ENCODE measurements at regions of chr11 and their contacts with region 1.

Region 1: GRCh38 chr11:47004595-47005033 is 68.1 kb downstream of the CSTPP1 start:
- DNase-seq: peak; percentile 83
- ATAC-seq: peak; percentile 98 to 99

Region 2: GRCh38 chr11:46832511-46833214 is 172.0 kb before region 1 on chr11:
- intact Hi-C with region 1: no loop called
- DNase-seq: no peak
- ATAC-seq: no peak

Region 3: GRCh38 chr11:46916286-46917108 is 88.1 kb before region 1 on chr11:
- intact Hi-C with region 1: loop called in 1 of 2 experiments (anchors 5 kb)
- DNase-seq: peak; percentile 69
- ATAC-seq: peak; percentile 66 to 80

Measured in left cardiac atrium (tissue), 4 donors.